Endothelial cell of umbilical vein (primary cell): ENCODE measurements at regions of chr21 and their contacts with region 1.

Region 1: DNA sequence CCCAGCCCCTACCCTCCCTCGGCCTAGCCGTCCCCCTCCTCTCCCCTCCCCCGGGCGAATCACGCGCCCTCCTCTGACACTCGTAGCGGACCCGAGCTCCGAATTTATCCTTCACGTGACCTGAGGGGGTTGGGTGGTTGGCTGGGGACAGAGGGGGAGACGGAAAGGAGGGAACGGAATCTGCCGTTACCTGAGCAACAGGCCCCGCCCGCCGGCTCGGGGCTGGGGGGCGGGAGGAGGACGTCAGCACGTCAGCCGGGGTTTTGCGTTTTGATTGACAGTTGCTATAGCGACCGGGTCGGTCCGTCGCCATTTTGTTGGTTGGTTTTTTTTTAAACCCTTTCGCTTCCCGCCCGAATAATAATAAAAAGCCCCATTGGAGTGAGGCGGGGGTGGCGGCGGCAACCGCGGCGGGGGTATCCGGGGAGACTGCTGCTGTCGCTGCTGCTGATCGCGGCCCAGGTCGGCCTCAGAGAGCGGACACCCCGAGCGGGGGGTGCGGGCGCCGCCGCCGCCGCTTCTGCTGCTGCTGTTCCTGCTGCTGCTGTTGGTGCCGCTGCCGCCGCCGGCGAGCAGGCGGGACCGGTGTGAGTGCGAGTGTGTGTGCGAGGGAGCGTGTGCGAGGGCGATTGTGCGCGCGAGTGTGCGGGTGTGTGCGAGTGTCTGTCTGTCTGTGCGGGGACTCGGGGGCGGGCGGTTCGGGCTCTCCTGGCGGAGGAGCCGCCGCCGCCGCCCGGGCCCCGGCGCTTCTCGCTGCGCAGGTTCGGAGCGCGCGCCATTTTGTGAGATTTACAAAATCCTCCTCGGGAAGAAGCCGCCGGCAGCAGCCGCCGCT is at the start of gene DYRK1A:
- DNase-seq: peak; percentile 99
- H3K4me3 ChIP-seq: peak within 1 kb of the TSS; percentile 89 to 94 (median 93)
- H3K27ac ChIP-seq: peak within 1 kb of the TSS; percentile 95
- H3K4me1 ChIP-seq: peaks cover 39% of the 10 kb centered on the region
- H3K27me3 ChIP-seq: no peaks in the 10 kb centered on the region
- CTCF ChIP-seq: peak in 1 of 2 donors; percentile 10
- POLR2A ChIP-seq: no peak
- total RNA-seq, gene DYRK1A: 51.8 TPM in 2 replicates

Region 2: GRCh38 chr21:36989699-36990507 is 376.8 kb before region 1 on chr21:
- CTCF ChIA-PET with region 1: no interaction called
- POLR2A ChIA-PET with region 1: no interaction called
- dilution Hi-C with region 1: no loop called
- intact Hi-C with region 1: loop called (anchors 10 kb)
- DNase-seq: peak; percentile 90
- H3K4me3 ChIP-seq: peak overlapping the region in 2 of 3 experiments; percentile 24 to 56
- H3K27ac ChIP-seq: peak overlapping the region; percentile 36
- H3K4me1 ChIP-seq: peaks cover 2% of the 10 kb centered on the region
- H3K27me3 ChIP-seq: no peaks in the 10 kb centered on the region
- CTCF ChIP-seq: peak; percentile 84 to 87
- POLR2A ChIP-seq: peak; percentile 73

Region 3: GRCh38 chr21:37220981-37221664 is 145.6 kb before region 1 on chr21:
- CTCF ChIA-PET with region 1: interaction called, 7 read pairs
- POLR2A ChIA-PET with region 1: interaction called, 3 read pairs
- dilution Hi-C with region 1: no loop called
- intact Hi-C with region 1: loop called (anchors 1 kb)
- DNase-seq: peak; percentile 93
- H3K4me3 ChIP-seq: peak overlapping the region; percentile 17 to 53 (median 52)
- H3K27ac ChIP-seq: peak overlapping the region; percentile 72
- H3K4me1 ChIP-seq: peaks cover 8% of the 10 kb centered on the region
- H3K27me3 ChIP-seq: no peaks in the 10 kb centered on the region
- CTCF ChIP-seq: peak; percentile 10 to 64
- POLR2A ChIP-seq: no peak

Region 4: DNA sequence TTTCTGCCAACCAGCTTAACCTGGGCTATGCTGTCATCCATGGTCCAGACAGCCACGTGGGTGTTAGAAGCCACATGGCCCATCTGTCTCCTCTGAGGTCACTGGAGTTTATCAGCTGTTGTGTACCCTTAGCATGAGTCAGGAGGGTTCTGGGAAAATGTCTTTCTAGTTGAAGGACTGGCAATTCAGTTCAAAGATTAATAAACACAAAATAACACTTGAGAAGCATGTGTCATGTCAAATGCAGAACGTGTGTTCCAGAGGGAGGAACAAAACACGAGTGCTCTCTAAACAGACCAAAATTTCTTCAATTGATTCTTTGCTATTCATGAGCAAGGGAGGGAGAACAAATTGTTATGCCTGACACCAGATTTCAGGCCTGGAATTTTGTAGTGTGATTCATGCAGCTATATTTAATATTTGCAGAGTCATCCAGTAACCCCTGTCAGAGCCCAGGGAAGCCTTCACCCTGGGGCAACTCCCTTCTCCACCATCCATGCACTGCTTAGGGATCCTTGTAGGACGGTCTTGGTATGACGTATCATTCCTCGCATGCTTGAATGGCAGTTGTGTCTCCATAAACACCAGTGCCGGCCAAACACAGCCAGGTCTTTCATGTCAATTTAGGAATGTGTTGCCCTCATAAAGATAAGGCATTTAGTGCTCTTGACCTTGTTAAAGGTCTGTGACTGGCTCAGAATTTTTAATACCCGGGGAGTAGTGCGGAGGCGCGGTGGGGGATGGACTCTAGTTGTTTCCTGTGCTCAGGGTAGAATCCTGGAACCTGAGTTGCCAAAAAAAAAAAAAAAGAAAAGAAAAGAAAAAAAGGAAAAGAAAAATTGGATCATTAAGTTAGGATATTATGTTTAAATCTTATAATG is 27.8 kb before region 1 on chr21:
- CTCF ChIA-PET with region 1: interaction called, 4 read pairs
- POLR2A ChIA-PET with region 1: no interaction called
- dilution Hi-C with region 1: no loop called
- intact Hi-C with region 1: loop called (anchors 1 kb)
- DNase-seq: peak; percentile 76
- H3K4me3 ChIP-seq: no peak overlapping the region
- H3K27ac ChIP-seq: peak overlapping the region; percentile 88
- H3K4me1 ChIP-seq: peaks cover 36% of the 10 kb centered on the region
- H3K27me3 ChIP-seq: no peaks in the 10 kb centered on the region
- CTCF ChIP-seq: no peak
- POLR2A ChIP-seq: no peak

Region 5: GRCh38 chr21:37452227-37452626 is 85.5 kb after region 1 on chr21:
- CTCF ChIA-PET with region 1: no interaction called
- POLR2A ChIA-PET with region 1: no interaction called
- dilution Hi-C with region 1: no loop called
- intact Hi-C with region 1: loop called (anchors 5 kb)
- DNase-seq: peak; percentile 35
- H3K4me3 ChIP-seq: no peak overlapping the region
- H3K27ac ChIP-seq: no peak overlapping the region
- H3K4me1 ChIP-seq: peaks cover 38% of the 10 kb centered on the region
- H3K27me3 ChIP-seq: no peaks in the 10 kb centered on the region
- CTCF ChIP-seq: no peak
- POLR2A ChIP-seq: no peak

Region 6: DNA sequence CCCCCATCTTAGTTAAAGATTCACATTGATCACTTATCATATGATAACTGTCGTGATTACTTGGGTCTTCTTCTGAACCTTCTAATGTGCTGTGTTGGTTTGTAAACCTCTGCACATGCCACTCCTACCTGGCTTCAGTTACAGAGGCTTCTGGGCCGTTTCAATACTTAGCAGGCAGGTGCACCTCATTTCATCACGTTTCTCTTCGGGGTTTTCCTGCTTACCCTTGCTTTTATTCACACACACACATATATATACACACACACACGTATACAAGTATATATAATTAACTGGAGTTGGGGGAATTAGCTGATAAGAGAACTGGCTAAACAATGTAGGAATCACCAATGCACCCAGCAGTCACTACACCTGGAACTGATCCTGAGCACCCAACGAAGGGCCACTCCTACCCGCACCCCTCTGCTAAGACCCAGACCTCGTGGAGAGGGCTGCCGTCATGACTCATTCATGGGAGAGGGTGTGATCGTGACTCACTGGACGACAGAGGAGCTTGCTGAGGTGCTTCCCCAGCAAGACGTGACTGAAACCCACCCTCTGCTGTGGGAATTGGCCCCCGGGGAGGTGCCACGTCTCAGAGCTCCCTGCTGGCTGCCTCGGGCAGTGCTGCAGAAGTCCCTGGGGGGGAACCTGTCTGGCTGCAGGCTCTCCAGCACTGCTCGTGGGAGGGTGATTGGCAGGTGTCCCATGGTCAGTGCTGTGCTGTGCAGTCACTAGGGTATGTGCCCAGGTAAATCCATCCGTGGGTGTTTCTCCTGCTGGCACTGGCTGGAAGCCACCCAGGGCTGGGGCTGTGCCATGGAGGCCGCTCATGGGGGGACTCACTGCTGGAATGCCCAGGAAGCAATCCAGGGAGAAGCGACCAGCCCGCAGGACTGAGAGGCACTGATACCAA is 166.4 kb after region 1 on chr21:
- CTCF ChIA-PET with region 1: no interaction called
- POLR2A ChIA-PET with region 1: no interaction called
- dilution Hi-C with region 1: no loop called
- intact Hi-C with region 1: no loop called
- DNase-seq: no peak
- H3K4me3 ChIP-seq: no peak overlapping the region
- H3K27ac ChIP-seq: no peak overlapping the region
- H3K4me1 ChIP-seq: no peaks in the 10 kb centered on the region
- H3K27me3 ChIP-seq: peaks cover 8 to 15% of the 10 kb centered on the region in 2 experiments
- CTCF ChIP-seq: no peak
- POLR2A ChIP-seq: no peak

Region 7: DNA sequence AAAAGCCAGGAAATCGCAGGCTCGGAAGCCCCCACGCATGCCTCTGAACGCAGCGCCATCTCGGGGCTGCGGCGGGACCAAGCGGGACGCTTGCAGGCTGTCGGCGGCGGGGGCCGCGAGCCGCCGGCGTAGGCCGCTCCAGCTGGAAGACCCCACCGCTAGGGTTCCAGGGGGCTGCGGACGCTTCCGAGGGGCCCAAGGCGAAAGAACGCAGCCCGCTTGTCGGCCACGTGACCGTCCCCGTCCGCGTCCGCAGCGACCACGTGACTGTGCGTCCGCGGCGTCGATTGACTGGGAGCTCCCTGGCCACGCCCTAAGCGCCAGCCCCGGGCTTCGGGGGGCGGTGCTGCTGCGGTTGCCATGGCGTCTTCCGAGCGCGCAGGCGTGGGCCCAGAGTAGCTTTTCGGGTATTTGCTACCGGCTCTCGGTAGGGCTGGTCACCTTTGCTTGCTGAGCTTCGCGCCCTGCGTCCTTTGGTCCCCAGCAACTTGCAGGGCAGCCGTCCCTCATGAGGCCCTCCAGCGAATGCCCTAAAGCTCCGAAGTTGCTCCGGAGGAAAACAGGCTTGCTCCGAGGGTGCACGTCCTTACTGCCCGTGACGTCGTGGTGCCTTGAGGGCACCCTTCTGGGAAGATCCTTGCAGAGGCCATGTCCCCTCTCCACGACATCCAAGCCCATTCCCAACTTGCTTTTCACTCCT is 197.1 kb after region 1 on chr21:
- CTCF ChIA-PET with region 1: interaction called, 8 read pairs
- POLR2A ChIA-PET with region 1: no interaction called
- dilution Hi-C with region 1: no loop called
- intact Hi-C with region 1: loop called (anchors 5 kb)
- DNase-seq: peak; percentile 93
- H3K4me3 ChIP-seq: peak overlapping the region; percentile 9 to 54 (median 49)
- H3K27ac ChIP-seq: peak overlapping the region; percentile 81
- H3K4me1 ChIP-seq: peaks cover 14% of the 10 kb centered on the region
- H3K27me3 ChIP-seq: peaks cover under 1 to 3% of the 10 kb centered on the region in 2 experiments
- CTCF ChIP-seq: peak; percentile 37 to 44
- POLR2A ChIP-seq: peak; percentile 89

Region 8: DNA sequence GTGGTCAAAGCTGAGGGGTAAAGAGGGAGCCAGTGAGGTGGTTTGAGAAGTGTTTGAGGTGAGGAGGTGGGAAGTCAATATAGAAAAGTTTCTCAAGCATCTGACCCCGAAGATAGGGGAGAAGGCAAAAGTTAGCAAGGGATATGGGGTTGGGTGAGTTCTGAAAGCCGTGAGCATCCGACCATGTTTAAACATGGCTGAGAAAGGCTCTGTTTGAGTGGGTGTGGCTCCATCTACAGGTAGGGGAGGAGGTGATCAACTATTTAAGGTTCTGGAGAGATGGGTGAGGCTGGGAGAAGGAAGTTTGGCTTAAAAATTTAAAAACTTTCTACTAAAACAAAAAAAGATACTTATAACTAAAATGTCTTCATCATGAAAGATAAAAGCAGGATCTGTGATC is 275.8 kb after region 1 on chr21:
- CTCF ChIA-PET with region 1: no interaction called
- POLR2A ChIA-PET with region 1: no interaction called
- dilution Hi-C with region 1: no loop called
- intact Hi-C with region 1: loop called (anchors 5 kb)
- DNase-seq: no peak
- H3K4me3 ChIP-seq: no peak overlapping the region
- H3K27ac ChIP-seq: no peak overlapping the region
- H3K4me1 ChIP-seq: peaks cover 38% of the 10 kb centered on the region
- H3K27me3 ChIP-seq: no peaks in the 10 kb centered on the region
- CTCF ChIP-seq: no peak
- POLR2A ChIP-seq: no peak